Pancreas (tissue), 10 donors: ENCODE measurements at regions of chr5 and their contacts with region 1.

Region 1: GRCh38 chr5:95892780-95893354 is 68.8 kb downstream of the ELL2 start:
- DNase-seq: peak in 3 of 6 donors; percentile 28 to 44 (median 30)
- ATAC-seq: peak; percentile 47 to 76 (median 70)
- H3K4me3 ChIP-seq: no peak overlapping the region
- H3K27ac ChIP-seq: no peak overlapping the region
- H3K4me1 ChIP-seq: peaks cover 0 to 10% (median 6%) of the 10 kb centered on the region in 3 donors
- H3K27me3 ChIP-seq: no peaks in the 10 kb centered on the region
- CTCF ChIP-seq: peak in 2 of 4 donors; percentile 6 to 22

Region 2: GRCh38 chr5:95961617-95962474 is 69.0 kb after region 1 on chr5 and contains the start of gene ELL2:
- intact Hi-C with region 1: loop called in 1 of 3 experiments (anchors 10 kb)
- DNase-seq: peak; percentile 99 to 100 (median 99)
- ATAC-seq: peak; percentile 79 to 85 (median 81)
- H3K4me3 ChIP-seq: peak within 1 kb of the TSS; percentile 65 to 97 (median 88)
- H3K27ac ChIP-seq: peak within 1 kb of the TSS; percentile 99 to 100 (median 100)
- H3K4me1 ChIP-seq: peaks cover 23 to 39% (median 23%) of the 10 kb centered on the region in 3 donors
- H3K27me3 ChIP-seq: no peaks in the 10 kb centered on the region
- CTCF ChIP-seq: no peak
- total RNA-seq, gene ELL2: 72.7 to 92.8 (median 82.4) TPM

Region 3: GRCh38 chr5:96279801-96280542 is 387.1 kb after region 1 on chr5:
- intact Hi-C with region 1: no loop called
- DNase-seq: no peak
- ATAC-seq: no peak
- H3K4me3 ChIP-seq: no peak overlapping the region
- H3K27ac ChIP-seq: no peak overlapping the region
- H3K4me1 ChIP-seq: no peaks in the 10 kb centered on the region
- H3K27me3 ChIP-seq: no peaks in the 10 kb centered on the region
- CTCF ChIP-seq: no peak